ENCODE measurements at regions of chr19 and their contacts with region 1.

Region 1: DNA sequence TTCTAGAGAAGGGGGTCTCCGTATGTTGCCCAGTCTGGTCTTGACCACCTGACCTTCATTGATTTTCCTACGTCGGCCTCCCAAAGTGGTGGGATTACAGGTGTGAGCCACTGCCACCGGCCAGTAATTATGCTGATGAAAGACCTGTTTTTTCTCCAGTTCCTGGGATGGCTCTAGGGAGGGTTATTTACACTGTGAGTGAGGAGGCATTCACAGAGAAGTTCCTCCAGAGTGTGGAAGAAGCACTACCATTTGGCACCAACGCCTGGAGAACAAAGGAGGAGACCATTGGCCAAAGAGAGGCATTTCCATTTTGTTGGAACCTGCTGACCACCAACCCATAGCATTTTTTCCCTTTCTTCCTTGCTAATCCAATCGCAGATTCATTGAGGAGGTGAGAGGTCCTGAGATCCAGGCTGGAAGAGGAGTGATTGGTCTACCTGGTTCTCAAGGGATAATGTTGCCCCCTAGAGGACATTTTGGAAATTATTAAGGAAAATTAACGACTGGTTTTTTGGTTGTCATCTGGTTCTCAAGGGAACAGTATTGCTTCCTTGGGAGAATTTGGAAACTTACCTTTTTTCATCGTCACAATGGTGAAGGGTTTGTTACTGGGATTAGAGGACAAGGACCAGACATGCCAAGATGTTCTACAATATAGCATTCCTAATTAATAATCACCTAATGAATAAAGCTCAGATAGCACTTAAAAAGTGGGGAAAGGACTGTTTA is 5.5 kb upstream of the SAE1 start:
- DNase-seq: no peak

Region 2: GRCh38 chr19:47013041-47013517 is 112.0 kb before region 1 on chr19:
- intact Hi-C with region 1: loop called (anchors 5 kb)
- DNase-seq: peak; percentile 92

Region 3: DNA sequence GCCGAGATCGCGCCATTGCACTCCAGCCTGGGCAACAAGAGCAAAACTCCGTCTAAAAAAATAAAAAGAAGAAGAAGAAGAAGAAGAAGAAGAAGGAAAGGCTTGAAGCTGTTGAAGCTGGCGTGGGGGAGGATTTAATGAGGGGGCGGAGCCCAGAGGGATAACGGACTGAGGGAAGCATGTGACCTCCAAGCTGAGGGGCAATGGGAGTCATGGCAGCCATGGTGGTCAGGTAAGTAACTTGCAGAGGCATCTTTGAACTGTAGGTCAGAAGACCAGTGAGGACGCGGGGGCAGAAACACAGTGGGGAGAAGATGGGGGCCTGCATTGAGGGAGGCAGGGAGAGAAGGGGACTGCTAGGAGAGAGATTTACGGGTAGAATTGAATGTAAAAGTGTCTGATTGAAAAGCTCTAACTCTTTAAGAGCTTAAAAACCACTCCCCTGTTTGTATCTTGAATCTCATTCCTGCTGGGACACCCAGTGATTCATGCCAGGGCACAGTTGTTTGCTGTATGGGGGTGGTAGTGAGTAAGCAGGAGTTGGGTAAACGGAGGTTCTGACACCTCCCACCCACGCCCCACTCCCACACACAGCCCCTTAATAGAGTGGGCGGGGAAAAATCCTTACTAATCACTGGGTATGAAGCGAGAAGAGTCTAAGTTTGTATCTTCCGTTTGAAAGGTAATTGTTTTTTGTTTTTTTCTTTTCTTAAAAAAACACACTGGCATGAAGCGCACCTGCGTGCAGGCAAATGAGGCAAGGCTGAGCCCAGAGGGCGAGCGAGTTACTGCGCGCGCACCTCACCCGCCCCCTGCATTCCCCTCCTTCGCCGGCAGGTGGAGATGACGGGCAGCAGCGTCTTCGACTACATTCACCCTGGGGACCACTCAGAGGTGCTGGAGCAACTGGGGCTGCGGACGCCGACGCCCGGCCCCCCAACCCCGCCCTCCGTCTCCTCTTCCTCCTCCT is 89.7 kb before region 1 on chr19:
- intact Hi-C with region 1: loop called (anchors 2 kb)
- DNase-seq: peak; percentile 93

Region 4: GRCh38 chr19:47075179-47075810 is 49.8 kb before region 1 on chr19:
- intact Hi-C with region 1: loop called (anchors 1 kb)
- DNase-seq: peak; percentile 86

Region 5: GRCh38 chr19:47190167-47190727 is 65.1 kb after region 1 on chr19:
- intact Hi-C with region 1: no loop called
- DNase-seq: no peak